HAP-1 (cell line): ENCODE measurements at regions of chr15 and their contacts with region 1.

Region 1: GRCh38 chr15:74134387-74135027 is 4.1 kb downstream of the ISLR2 start:
- DNase-seq: peak in 1 of 2 experiments; percentile 60
- H3K4me3 ChIP-seq: no peak overlapping the region
- H3K4me1 ChIP-seq: peaks cover 13% of the 10 kb centered on the region
- H3K27me3 ChIP-seq: peaks cover 51% of the 10 kb centered on the region

Region 2: DNA sequence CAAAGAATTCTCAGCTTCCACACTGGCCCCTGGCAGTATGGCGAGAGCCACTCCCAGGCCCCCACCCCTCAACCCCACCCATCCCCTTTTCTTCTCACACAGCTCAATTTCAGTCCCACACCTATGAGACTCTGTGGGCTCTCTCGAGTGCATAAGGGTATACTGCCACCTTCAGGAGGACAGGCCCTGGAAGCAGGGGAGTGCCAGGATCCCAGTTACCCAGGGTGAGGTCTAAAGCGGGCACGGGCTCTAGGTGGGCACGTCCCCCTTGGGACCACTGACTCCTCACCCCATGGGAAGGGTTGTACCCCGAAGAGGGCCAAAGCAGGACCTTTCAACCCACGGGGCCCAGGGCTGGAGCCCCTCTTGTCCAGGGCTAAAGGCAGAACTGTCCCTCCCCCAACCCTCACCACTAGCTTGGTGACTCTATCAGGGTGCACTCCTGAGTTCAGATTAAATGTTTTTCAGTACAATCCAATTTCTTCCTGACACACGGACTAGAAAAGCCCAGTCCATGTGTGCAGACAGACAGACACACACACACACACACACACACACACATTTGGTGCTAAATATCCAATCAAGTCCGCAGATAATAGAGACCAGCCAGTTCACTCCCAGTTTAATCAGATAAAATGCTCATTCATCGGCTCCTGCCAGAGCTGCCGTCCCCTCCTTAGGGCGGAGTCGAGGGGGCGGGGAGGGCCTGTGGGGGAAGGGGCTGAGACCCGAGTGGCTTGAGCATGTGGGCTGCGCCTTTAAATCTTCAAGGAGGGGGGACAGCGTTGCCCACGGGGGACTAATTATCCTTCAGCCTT is 173.5 kb after region 1 on chr15:
- in situ Hi-C with region 1: loop called (anchors 5 kb)
- DNase-seq: peak; percentile 79 to 86
- H3K4me3 ChIP-seq: no peak overlapping the region
- H3K4me1 ChIP-seq: peaks cover 11% of the 10 kb centered on the region
- H3K27me3 ChIP-seq: peaks cover 4% of the 10 kb centered on the region; the same call in 1 of the 2 replicates